OCI-LY7 (cell line): ENCODE measurements at regions of chr3 and their contacts with region 1.

Region 1: DNA sequence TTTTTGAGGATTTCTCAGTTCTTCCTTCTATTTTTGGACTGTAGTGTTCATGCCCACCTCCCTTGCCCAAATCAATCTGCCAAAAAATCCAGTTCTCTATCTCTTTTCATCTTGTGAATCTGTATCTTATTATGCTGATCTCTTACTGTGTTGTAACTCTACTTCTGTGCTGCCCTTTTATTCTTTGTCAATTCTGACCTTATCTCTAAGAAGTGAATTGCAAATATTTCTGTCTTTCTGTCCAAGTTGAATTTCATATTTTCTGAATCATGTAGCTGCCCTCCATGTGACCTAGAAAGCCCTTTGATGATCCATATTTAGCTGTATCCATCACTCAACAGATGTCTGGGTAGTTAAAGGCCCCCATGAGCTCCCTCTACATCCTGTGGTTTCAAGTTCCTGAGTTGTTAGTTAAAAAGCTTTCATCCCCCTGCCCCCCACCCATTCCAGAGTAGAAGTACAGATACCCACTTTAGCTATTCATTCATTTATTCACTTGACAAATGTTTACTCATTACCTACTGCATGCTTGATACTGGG is 33.6 kb upstream of the ETV5 start:
- DNase-seq: peak; percentile 25
- H3K4me3 ChIP-seq: no peak overlapping the region
- H3K27ac ChIP-seq: no peak overlapping the region
- H3K4me1 ChIP-seq: peaks cover 12% of the 10 kb centered on the region
- CTCF ChIP-seq: no peak

Region 2: GRCh38 chr3:186130736-186131135 is 11.7 kb before region 1 on chr3:
- CTCF ChIA-PET with region 1: interaction called, 5 read pairs
- POLR2A ChIA-PET with region 1: interaction called, 10 read pairs
- intact Hi-C with region 1: no loop called
- DNase-seq: no peak
- H3K4me3 ChIP-seq: no peak overlapping the region
- H3K27ac ChIP-seq: no peak overlapping the region
- H3K4me1 ChIP-seq: no peaks in the 10 kb centered on the region
- CTCF ChIP-seq: no peak

Region 3: GRCh38 chr3:186583831-186584230 is 441.4 kb after region 1 on chr3:
- CTCF ChIA-PET with region 1: no interaction called
- POLR2A ChIA-PET with region 1: no interaction called
- intact Hi-C with region 1: no loop called
- DNase-seq: no peak
- H3K4me3 ChIP-seq: no peak overlapping the region
- H3K27ac ChIP-seq: no peak overlapping the region
- H3K4me1 ChIP-seq: no peaks in the 10 kb centered on the region
- CTCF ChIP-seq: no peak